GM13976 (cell line): ENCODE measurements at regions of chr10 and their contacts with region 1.

Region 1: DNA sequence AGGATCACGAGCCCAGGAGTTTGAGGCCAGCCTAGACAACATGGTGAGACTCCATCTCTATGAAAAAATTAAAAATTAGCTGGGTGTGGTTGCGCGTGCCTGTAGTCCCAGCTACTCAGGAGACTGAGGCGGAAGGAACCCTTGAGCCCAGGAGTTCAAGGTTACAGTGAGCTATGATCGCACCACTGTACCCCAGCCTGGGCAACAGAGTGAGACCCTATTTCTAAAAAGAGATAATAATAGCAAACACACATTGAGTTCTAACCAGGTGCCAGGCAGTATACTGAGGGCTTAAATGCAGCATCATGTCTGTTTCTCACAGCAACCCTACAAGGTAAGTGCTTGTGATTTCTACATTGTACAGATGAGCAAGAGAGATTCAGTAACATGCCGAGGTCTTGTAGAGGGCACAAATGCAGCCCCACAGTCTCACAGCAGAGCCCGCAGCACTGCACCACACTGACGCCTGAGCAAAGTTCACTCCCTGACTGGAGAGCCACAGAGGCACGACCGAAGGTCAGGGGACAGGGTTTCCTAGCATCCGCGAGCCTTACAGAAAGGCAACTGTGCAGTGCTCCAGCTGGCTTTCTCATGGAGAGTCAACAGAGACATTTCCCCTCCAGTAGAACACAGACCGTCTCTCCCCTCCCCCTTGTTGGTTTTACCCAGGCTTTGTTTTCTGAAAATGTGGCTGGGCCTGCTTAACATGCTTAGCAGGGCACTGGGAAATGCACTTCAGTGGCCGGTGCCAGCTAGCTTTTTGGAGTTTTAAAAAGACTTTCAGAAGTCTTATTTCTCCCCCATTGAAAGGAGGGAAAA is 36.5 kb downstream of the PDSS1 start:
- DNase-seq: no peak
- CTCF ChIP-seq: no peak

Region 2: GRCh38 chr10:25666276-25666675 is 1067.7 kb before region 1 on chr10:
- in situ Hi-C with region 1: no loop called
- DNase-seq: no peak
- CTCF ChIP-seq: no peak

Region 3: GRCh38 chr10:26642896-26643653 is 90.9 kb before region 1 on chr10:
- in situ Hi-C with region 1: no loop called
- DNase-seq: no peak
- CTCF ChIP-seq: no peak

Region 4: GRCh38 chr10:26879740-26880139 is 145.8 kb after region 1 on chr10:
- in situ Hi-C with region 1: loop called (anchors 5 kb)
- DNase-seq: no peak
- CTCF ChIP-seq: no peak